ENCODE measurements at regions of chr2 and their contacts with region 1.

Region 1: DNA sequence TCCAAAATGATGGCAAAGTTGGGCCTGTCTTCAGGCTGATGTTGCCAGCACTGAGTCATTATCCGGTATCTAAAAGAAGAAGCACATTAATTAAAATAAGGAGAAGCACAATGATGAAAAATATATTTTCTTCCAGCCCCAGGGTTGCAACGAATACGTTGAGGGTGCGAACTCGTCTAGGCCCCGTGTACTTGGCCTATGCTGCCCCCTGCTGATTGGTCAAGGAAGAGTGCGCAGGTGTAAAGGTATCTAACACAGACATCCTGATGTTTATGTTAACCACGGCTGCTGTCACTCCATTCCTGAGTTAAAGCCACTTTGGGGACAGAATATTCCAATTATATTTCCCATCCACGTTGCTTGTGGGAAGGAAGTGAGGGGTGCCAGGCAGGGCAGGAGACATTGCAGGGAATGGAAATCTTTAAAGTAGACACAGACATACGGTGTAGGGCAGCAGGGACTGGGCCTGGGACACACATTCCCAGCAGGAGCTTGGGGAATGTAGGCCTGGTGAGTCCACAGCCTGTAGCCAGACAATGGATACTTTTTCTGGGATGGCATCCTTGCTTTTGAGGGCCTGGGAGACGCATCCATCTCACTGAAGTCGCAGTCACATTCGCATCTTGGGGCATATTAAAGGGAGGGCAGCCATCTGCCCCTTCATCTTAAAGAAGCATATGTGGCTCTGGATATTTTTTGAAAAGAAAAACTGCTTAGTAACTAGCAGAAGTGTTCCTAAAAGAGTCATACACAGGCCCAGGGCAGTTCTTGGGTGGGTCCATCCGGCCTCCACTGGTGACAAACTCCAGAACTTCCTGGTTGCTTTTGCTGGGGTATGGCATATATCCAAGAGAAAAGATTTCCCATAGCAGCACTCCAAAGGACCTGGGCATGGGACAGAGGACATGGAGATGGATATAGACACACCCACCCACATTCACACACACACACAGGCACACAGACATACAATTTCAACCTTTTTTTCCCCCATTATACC is 81.9 kb downstream of the CLIP4 start:
- DNase-seq: peak; percentile 36
- H3K4me3 ChIP-seq: no peak overlapping the region
- CTCF ChIP-seq: peak; percentile 79

Region 2: GRCh38 chr2:28958689-28959088 is 238.4 kb before region 1 on chr2:
- in situ Hi-C with region 1: loop called (anchors 10 kb)
- DNase-seq: peak; percentile 72
- H3K4me3 ChIP-seq: no peak overlapping the region
- CTCF ChIP-seq: peak; percentile 58

Region 3: DNA sequence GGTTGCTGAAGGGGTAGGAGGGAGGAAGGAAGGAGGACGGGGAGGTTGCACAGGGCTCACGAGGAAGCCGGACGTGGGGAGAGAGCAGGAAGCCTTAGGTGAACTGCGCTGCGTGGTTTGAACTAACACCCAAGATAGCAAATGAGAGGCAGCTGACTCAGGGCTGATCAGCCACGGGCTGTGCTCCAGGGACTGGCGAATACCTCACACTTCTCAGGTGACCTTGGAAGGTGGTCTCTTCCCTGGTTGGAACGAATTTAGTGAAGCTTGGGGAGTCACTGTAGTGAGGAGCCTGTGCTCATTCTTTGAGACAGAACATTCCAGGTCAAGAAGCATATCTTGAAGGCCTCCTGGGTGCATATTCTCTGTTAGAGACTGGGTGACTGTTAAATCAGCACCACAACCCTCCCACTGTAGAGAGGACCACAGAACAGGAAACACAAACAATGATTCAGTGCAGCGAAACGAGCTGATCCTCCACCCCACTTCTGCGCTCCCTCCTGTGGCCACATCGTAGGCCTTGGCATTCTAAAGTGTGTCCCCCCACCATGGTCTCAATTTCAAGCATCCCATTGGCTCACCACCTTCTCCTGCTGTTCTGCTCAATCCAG is 182.2 kb before region 1 on chr2:
- in situ Hi-C with region 1: loop called (anchors 10 kb)
- DNase-seq: peak; percentile 62
- H3K4me3 ChIP-seq: no peak overlapping the region
- CTCF ChIP-seq: peak; percentile 52

Region 4: GRCh38 chr2:29238497-29238896 is 41.4 kb after region 1 on chr2:
- in situ Hi-C with region 1: no loop called
- DNase-seq: no peak
- H3K4me3 ChIP-seq: no peak overlapping the region
- CTCF ChIP-seq: peak; percentile 63